ENCODE measurements at regions of chr12 and their contacts with region 1.

Region 1: GRCh38 chr12:52156736-52157565 is 34.9 kb downstream of the KRT80 start:
- DNase-seq: peak; percentile 67 to 73 (median 68)
- H3K4me3 ChIP-seq: no peak overlapping the region
- H3K4me3 Mint-ChIP-seq: peak overlapping the region in 1 of 8 donors; percentile 21
- H3K27ac ChIP-seq: no peak overlapping the region
- H3K27ac Mint-ChIP-seq: peak overlapping the region in 6 of 7 donors; percentile 48 to 98 (median 97)
- H3K4me1 ChIP-seq: peaks cover 60% of the 10 kb centered on the region
- H3K4me1 Mint-ChIP-seq: peaks cover 30 to 70% (median 41%) of the 10 kb centered on the region in 4 donors
- H3K27me3 ChIP-seq: no peaks in the 10 kb centered on the region
- H3K27me3 Mint-ChIP-seq: no peaks in the 10 kb centered on the region

Region 2: GRCh38 chr12:52167954-52168717 is 11.2 kb after region 1 on chr12:
- CTCF ChIA-PET with region 1: interaction called, 10 read pairs
- POLR2A ChIA-PET with region 1: no interaction called
- intact Hi-C with region 1: no loop called
- DNase-seq: no peak
- H3K4me3 ChIP-seq: no peak overlapping the region
- H3K4me3 Mint-ChIP-seq: no peak overlapping the region
- H3K27ac ChIP-seq: no peak overlapping the region
- H3K27ac Mint-ChIP-seq: peak overlapping the region in 2 of 7 donors; percentile 29 to 30
- H3K4me1 ChIP-seq: peaks cover 3% of the 10 kb centered on the region
- H3K4me1 Mint-ChIP-seq: peaks cover 4 to 6% (median 5%) of the 10 kb centered on the region in 4 donors
- H3K27me3 ChIP-seq: no peaks in the 10 kb centered on the region
- H3K27me3 Mint-ChIP-seq: peaks cover 0 to 2% of the 10 kb centered on the region in 2 donors

Region 3: GRCh38 chr12:52213512-52214420 is 56.8 kb after region 1 on chr12:
- CTCF ChIA-PET with region 1: interaction called, 5 read pairs
- POLR2A ChIA-PET with region 1: no interaction called
- intact Hi-C with region 1: loop called (anchors 1 kb)
- DNase-seq: peak in 4 of 5 donors; percentile 23 to 50 (median 34)
- H3K4me3 ChIP-seq: no peak overlapping the region
- H3K4me3 Mint-ChIP-seq: no peak overlapping the region
- H3K27ac ChIP-seq: no peak overlapping the region
- H3K27ac Mint-ChIP-seq: peak overlapping the region in 2 of 7 donors; percentile 13 to 30
- H3K4me1 ChIP-seq: no peaks in the 10 kb centered on the region
- H3K4me1 Mint-ChIP-seq: peaks cover 0 to 2% (median under 1%) of the 10 kb centered on the region in 4 donors
- H3K27me3 ChIP-seq: no peaks in the 10 kb centered on the region
- H3K27me3 Mint-ChIP-seq: peaks cover 3 to 22% of the 10 kb centered on the region in 2 donors

Region 4: GRCh38 chr12:52327052-52327829 is 170.3 kb after region 1 on chr12:
- CTCF ChIA-PET with region 1: interaction called, 101 read pairs
- POLR2A ChIA-PET with region 1: interaction called, 5 read pairs
- intact Hi-C with region 1: loop called (anchors 1 kb)
- DNase-seq: peak; percentile 76 to 84 (median 80)
- H3K4me3 ChIP-seq: no peak overlapping the region
- H3K4me3 Mint-ChIP-seq: peak overlapping the region in 1 of 8 donors; percentile 2
- H3K27ac ChIP-seq: no peak overlapping the region
- H3K27ac Mint-ChIP-seq: peak overlapping the region in 2 of 7 donors; percentile 36 to 75
- H3K4me1 ChIP-seq: peaks cover 3% of the 10 kb centered on the region
- H3K4me1 Mint-ChIP-seq: peaks cover 5 to 7% (median 6%) of the 10 kb centered on the region in 4 donors
- H3K27me3 ChIP-seq: no peaks in the 10 kb centered on the region
- H3K27me3 Mint-ChIP-seq: peaks cover 7 to 12% of the 10 kb centered on the region in 2 donors

Region 5: GRCh38 chr12:52506858-52507715 is 350.1 kb after region 1 on chr12:
- CTCF ChIA-PET with region 1: interaction called, 3 read pairs
- POLR2A ChIA-PET with region 1: no interaction called
- intact Hi-C with region 1: loop called (anchors 1 kb)
- DNase-seq: peak in 2 of 5 donors; percentile 11 to 20
- H3K4me3 ChIP-seq: no peak overlapping the region
- H3K4me3 Mint-ChIP-seq: no peak overlapping the region
- H3K27ac ChIP-seq: no peak overlapping the region
- H3K27ac Mint-ChIP-seq: no peak overlapping the region
- H3K4me1 ChIP-seq: no peaks in the 10 kb centered on the region
- H3K4me1 Mint-ChIP-seq: no peaks in the 10 kb centered on the region
- H3K27me3 ChIP-seq: no peaks in the 10 kb centered on the region
- H3K27me3 Mint-ChIP-seq: peaks cover 19 to 23% of the 10 kb centered on the region in 2 donors

Region 6: DNA sequence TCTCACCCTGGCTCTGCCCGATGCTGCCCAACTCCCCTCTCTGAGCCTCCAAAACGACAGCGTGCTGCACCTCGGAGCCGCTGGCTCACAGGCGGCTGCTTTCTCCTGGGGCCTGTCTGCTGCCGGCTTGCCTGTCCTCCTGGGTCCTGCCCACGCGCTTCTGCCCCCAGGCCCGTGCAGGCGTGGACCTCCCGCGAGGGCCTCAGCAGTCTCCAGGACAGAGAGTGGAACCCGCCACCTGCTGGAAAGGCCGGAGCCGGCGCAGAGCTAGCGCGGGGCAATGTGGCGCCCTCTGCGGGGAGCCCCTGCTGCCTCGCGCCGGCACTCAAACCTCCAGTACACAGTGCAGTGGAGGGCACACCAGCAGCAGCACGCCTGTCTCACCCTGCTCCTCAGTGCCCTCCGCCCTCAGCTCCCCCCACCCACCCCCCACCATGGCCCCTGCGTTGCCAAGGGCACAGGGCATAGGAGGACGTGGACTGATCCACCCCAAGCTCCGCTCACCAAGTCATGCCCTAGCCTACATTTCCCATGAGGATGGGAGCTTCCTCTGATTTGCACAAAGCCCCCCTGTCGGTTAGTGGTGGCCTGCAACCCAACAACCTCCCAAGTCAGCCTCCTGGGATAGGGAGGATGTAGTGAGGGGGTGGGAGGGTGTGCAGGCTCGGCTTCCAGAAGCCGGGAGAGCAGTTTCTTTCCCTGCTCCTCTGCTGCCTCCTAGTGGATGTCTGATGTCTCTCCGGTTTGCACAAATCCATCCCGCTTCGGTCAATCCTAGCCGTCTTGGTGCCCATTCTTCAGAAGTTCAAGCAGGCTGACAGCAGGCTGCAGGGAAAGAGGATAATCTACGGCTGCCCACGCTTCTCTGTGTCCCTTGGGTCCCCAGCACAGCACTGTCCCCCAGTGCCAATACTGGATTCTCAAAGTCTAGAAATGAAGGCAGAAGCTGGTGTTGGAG is 722.7 kb after region 1 on chr12:
- CTCF ChIA-PET with region 1: interaction called, 17 read pairs
- POLR2A ChIA-PET with region 1: no interaction called
- intact Hi-C with region 1: loop called (anchors 1 kb)
- DNase-seq: peak; percentile 65 to 70 (median 67)
- H3K4me3 ChIP-seq: no peak overlapping the region
- H3K4me3 Mint-ChIP-seq: peak overlapping the region; percentile 48 to 85 (median 73)
- H3K27ac ChIP-seq: no peak overlapping the region
- H3K27ac Mint-ChIP-seq: peak overlapping the region in 1 of 7 donors; percentile 52
- H3K4me1 ChIP-seq: peaks cover 8% of the 10 kb centered on the region
- H3K4me1 Mint-ChIP-seq: peaks cover 3 to 14% (median 10%) of the 10 kb centered on the region in 4 donors
- H3K27me3 ChIP-seq: no peaks in the 10 kb centered on the region
- H3K27me3 Mint-ChIP-seq: peaks cover 2 to 9% of the 10 kb centered on the region in 2 donors